ENCODE measurements at regions of chr5 and their contacts with region 1.

Region 1: DNA sequence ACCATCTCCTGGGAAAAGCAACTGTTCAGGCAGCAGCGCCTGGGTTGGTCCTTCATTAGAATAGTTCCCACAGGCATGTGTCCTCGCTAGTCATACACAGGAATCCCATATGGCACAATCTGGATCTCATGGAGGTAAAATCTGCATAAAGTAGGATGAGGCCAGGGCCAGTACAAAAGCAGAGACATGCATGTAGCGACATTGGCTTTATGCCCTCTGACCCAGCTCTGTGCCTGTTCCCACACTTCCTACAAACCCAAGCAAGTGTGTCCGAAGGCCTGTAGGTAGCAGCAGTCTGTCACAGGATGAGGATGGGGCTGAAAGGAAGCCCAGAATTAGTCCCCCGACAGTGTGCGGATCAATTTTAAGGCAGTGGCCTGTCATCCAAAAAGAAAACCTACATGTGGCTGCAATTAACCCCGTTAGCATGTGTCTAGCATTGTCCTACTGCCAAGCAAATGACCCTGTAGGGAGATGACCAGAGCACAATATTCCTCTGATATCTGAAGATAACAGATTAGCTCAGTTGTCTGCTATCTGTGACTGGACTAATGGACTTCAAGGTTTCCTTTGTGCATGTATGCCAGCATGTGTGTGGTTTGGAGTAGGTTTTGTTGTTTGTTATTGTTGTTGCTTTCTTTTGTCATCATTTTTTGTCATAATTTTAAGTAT is 178.8 kb downstream of the TMEM161B start:
- DNase-seq: no peak
- ATAC-seq: no peak
- H3K4me3 ChIP-seq: no peak overlapping the region
- H3K27ac ChIP-seq: no peak overlapping the region
- H3K4me1 ChIP-seq: no peaks in the 10 kb centered on the region
- H3K27me3 ChIP-seq: peaks cover 0 to 6% (median 0%) of the 10 kb centered on the region in 3 donors
- CTCF ChIP-seq: no peak

Region 2: DNA sequence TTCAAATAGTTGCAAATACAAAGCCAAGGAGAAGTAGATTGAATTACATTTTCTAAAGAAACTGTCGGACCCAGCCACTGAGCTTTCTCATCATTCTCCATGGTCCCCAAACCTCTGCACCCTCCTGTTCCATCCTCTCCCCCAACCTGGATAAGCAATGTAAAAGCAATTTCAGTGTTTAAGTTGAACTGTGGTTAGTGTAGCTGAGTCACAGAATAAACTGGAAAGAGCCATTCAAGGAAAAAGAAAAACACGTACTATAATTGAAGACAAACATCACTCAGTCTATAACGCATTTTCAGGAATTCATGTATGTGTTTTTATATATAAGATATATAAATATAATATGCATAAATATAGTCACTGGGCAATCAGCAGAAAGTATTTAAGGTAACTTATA is 232.9 kb after region 1 on chr5:
- intact Hi-C with region 1: loop called in 1 of 2 experiments (anchors 5 kb)
- DNase-seq: no peak
- ATAC-seq: no peak
- H3K4me3 ChIP-seq: no peak overlapping the region
- H3K27ac ChIP-seq: no peak overlapping the region
- H3K4me1 ChIP-seq: no peaks in the 10 kb centered on the region
- H3K27me3 ChIP-seq: no peaks in the 10 kb centered on the region
- CTCF ChIP-seq: no peak